ENCODE measurements at regions of chr1 and their contacts with region 1.

Region 1: DNA sequence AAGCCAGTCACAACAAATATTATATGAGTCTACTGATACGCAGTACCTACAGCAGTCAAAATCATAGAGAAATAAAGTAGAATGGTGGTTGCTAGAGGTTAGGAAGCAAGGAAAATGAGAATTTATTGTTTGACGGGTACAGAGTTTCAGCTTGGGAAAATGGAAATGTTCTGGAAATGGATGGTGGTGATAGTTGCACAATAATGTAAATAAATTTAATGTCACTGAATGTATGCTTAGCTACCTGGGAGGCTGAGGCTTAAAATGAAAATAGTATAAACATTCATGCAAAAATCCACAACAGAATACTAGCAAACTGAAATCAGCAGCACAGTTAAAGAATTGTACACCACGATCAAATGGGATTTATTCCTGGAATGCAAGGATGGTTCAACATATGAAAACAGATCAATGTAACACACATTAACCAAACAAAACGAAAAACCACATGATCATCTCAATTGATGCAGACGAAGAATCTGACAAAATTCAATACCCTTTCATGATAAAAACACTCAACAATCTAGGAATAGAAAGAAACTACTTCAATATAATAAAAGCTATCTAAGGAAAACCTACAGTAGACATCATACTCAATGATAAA is 10.7 kb downstream of the TUT4 start:
- DNase-seq: no peak
- H3K4me3 ChIP-seq: no peak overlapping the region
- H3K27ac ChIP-seq: no peak overlapping the region
- H3K4me1 ChIP-seq: no peaks in the 10 kb centered on the region
- H3K27me3 ChIP-seq: no peaks in the 10 kb centered on the region
- CTCF ChIP-seq: no peak
- POLR2A ChIP-seq: no peak

Region 2: DNA sequence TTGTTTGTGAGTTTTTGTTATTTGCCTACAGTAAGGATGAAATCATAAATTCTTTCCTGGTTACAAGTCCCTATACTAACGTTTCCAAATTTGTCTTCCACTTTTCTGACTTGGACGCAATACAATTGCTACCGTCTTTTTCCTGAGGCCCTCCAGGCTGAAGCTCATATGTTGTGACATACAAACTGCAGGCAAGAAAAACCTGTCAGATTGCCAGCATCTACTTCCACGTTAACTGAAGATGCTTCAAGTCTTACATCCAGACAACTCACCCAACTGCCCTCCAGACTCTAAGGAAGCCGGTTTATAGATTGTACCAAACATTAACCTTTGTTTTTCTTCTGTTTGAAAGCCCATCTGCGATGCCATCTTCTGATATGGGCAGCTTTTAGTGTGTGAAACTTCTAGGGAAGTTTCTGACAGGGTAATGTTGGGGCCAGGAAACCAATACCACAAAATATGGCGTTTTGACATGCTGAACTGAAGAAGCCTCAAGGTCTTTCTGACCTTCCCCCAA is 1327.5 kb before region 1 on chr1:
- intact Hi-C with region 1: no loop called
- DNase-seq: no peak
- H3K4me3 ChIP-seq: no peak overlapping the region
- H3K27ac ChIP-seq: no peak overlapping the region
- H3K4me1 ChIP-seq: no peaks in the 10 kb centered on the region
- H3K27me3 ChIP-seq: no peaks in the 10 kb centered on the region
- CTCF ChIP-seq: no peak
- POLR2A ChIP-seq: no peak

Region 3: GRCh38 chr1:51859333-51859732 is 682.9 kb before region 1 on chr1:
- intact Hi-C with region 1: loop called (anchors 5 kb)
- DNase-seq: no peak
- H3K4me3 ChIP-seq: no peak overlapping the region
- H3K27ac ChIP-seq: no peak overlapping the region
- H3K4me1 ChIP-seq: no peaks in the 10 kb centered on the region
- H3K27me3 ChIP-seq: no peaks in the 10 kb centered on the region
- CTCF ChIP-seq: no peak
- POLR2A ChIP-seq: no peak

Region 4: GRCh38 chr1:52559875-52560274 is 17.7 kb after region 1 on chr1:
- intact Hi-C with region 1: loop called (anchors 1 kb)
- DNase-seq: no peak
- H3K4me3 ChIP-seq: no peak overlapping the region
- H3K27ac ChIP-seq: no peak overlapping the region
- H3K4me1 ChIP-seq: no peaks in the 10 kb centered on the region
- H3K27me3 ChIP-seq: no peaks in the 10 kb centered on the region
- CTCF ChIP-seq: no peak
- POLR2A ChIP-seq: no peak

Region 5: GRCh38 chr1:53104289-53104913 is 562.2 kb after region 1 on chr1:
- intact Hi-C with region 1: no loop called
- DNase-seq: no peak
- H3K4me3 ChIP-seq: no peak overlapping the region
- H3K27ac ChIP-seq: no peak overlapping the region
- H3K4me1 ChIP-seq: no peaks in the 10 kb centered on the region
- H3K27me3 ChIP-seq: no peaks in the 10 kb centered on the region
- CTCF ChIP-seq: no peak
- POLR2A ChIP-seq: no peak